Activated CD8-positive, alpha-beta T cell treated with anti-CD3 and anti-CD28 coated beads, Interleukin-2, amount 10 ng/mL, durations not matched to agents 7 days and 5 days (primary cell): ENCODE measurements at regions of chr15 and their contacts with region 1.

Region 1: DNA sequence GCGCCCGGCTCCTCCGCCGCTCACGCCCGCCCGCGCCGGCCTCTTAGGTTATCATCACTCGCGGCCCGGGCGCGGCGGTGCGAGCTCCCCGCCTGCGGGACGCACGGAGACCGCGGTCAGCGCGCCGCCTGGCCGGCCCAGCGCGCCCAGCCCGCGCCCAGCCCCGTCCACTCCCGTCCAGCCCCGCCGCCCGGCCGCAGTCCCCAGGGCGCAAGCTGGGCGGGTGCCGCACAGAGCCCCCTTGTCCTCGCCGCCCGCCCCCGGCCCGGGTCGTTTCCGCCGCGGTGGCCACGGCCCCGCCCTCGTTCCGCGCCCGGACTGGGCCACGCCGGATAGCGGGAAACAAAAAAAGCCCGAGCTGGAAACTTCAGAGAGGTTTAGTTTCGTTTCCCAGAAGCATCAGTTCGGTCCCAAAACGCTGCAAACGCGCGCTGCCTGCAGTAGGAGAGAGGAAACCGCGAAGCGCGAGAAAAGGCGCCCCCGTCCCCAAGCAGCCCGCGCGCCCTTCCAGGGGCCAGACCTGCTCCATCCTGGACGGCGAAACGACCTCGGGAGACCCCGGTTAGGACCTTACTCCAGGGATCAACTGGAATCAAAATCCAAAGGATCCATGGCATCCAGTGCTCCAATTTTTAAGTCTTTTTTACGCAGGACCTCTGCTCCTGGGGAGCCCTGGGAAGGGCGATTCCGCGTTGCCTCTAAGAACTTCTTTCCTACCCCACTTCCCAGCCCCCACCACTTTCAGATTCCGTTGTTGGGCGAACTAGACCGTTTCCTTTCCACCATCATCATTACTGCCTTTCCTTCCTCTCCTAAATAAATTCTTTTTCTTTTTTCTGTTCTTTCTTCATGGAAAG is at the start of gene ATP10A:
- DNase-seq: peak; percentile 69
- ATAC-seq: peak; percentile 30
- H3K4me3 Mint-ChIP-seq: peak within 1 kb of the TSS; percentile 96
- H3K27ac Mint-ChIP-seq: peak within 1 kb of the TSS; percentile 95
- H3K4me1 Mint-ChIP-seq: peaks cover 40% of the 10 kb centered on the region
- H3K27me3 Mint-ChIP-seq: peaks cover 10% of the 10 kb centered on the region
- total RNA-seq, gene ATP10A: 53.8 to 58.9 TPM

Region 2: GRCh38 chr15:25345943-25346342 is 517.4 kb before region 1 on chr15:
- CTCF ChIA-PET with region 1: no interaction called
- POLR2A ChIA-PET with region 1: no interaction called
- DNase-seq: no peak
- ATAC-seq: no peak
- H3K4me3 Mint-ChIP-seq: no peak overlapping the region
- H3K27ac Mint-ChIP-seq: no peak overlapping the region
- H3K4me1 Mint-ChIP-seq: no peaks in the 10 kb centered on the region
- H3K27me3 Mint-ChIP-seq: no peaks in the 10 kb centered on the region

Region 3: GRCh38 chr15:25501828-25502446 is 361.4 kb before region 1 on chr15:
- CTCF ChIA-PET with region 1: no interaction called
- POLR2A ChIA-PET with region 1: no interaction called
- DNase-seq: no peak
- ATAC-seq: no peak
- H3K4me3 Mint-ChIP-seq: no peak overlapping the region
- H3K27ac Mint-ChIP-seq: no peak overlapping the region
- H3K4me1 Mint-ChIP-seq: no peaks in the 10 kb centered on the region
- H3K27me3 Mint-ChIP-seq: no peaks in the 10 kb centered on the region

Region 4: GRCh38 chr15:25824618-25825017 is 38.7 kb before region 1 on chr15:
- CTCF ChIA-PET with region 1: no interaction called
- POLR2A ChIA-PET with region 1: no interaction called
- DNase-seq: no peak
- ATAC-seq: no peak
- H3K4me3 Mint-ChIP-seq: no peak overlapping the region
- H3K27ac Mint-ChIP-seq: no peak overlapping the region
- H3K4me1 Mint-ChIP-seq: peaks cover 38% of the 10 kb centered on the region
- H3K27me3 Mint-ChIP-seq: no peaks in the 10 kb centered on the region

Region 5: GRCh38 chr15:25850154-25851111 is 12.9 kb before region 1 on chr15:
- CTCF ChIA-PET with region 1: interaction called, 15 read pairs
- POLR2A ChIA-PET with region 1: interaction called, 42 read pairs
- DNase-seq: peak; percentile 78
- ATAC-seq: peak; percentile 72
- H3K4me3 Mint-ChIP-seq: peak overlapping the region; percentile 93
- H3K27ac Mint-ChIP-seq: peak overlapping the region; percentile 99
- H3K4me1 Mint-ChIP-seq: peaks cover 91% of the 10 kb centered on the region
- H3K27me3 Mint-ChIP-seq: no peaks in the 10 kb centered on the region

Region 6: DNA sequence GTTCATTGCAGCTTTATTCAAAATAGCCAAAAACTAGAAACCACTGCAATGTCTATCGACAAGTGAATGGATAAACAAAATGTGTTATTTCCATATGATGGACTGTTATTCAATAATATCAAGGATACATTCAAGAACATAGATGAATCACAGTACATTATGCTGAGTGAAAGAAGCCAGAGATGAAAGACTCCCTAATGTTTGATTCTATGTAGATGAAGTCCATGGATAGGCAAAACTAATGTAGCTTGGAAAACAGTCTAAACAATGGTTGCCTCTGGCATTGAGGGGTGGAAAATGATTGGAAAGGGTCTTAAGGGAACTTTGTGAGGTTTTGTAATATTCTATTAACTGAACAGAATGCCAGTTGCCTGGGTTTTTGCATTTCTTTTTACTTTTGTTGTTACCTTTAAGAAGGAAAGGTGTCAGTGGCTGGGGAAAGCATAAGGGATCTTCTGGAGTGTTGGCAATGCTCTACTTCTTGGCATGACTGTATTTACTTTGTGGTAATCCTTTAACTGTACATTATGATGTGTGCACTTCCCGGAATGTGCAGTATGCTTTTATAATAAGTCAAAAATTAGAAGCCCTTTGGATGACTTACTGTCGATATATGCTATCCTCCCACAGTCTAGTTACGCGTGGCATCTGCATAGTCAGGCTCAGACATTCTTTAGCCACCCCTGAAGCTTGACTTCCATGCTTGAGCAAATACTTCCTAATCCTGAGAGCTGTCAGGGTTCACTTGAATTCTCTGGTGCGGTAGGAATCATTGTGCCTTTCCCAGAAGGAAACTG is 20.3 kb after region 1 on chr15:
- CTCF ChIA-PET with region 1: no interaction called
- POLR2A ChIA-PET with region 1: no interaction called
- DNase-seq: no peak
- ATAC-seq: no peak
- H3K4me3 Mint-ChIP-seq: no peak overlapping the region
- H3K27ac Mint-ChIP-seq: no peak overlapping the region
- H3K4me1 Mint-ChIP-seq: peaks cover 1% of the 10 kb centered on the region
- H3K27me3 Mint-ChIP-seq: peaks cover 30% of the 10 kb centered on the region